ENCODE measurements at regions of chr7 and their contacts with region 1.

Region 1: DNA sequence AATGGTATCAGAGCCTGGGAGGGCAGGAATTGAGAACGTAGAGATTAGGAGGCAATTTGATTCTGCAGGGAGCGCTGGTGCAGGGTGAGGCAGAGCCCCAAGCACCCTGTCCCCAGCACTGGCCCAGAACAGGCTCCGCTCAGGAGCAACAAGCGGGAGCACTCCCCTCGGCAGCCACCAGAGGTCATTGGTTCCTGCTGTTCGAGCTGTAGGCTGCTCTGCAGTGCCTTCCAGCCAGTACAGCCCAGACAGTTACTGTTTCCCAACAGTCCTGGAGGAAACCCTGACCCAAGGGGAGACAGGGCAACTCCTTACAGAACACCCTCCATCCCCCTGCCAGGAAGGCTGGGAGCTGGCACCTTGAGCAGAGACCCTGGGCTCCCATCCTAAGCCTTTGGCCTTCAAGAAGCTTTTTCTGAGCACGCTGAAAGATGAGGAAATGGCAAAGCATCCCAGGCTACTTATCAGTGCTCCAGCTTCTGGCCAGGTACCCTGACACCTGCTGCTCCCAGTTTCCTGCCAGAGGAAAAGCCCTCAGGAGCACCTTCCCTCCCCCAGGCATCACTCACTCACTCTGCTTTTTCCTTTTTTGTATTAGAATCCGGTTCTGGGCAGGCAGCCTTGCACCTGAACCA is 71.2 kb upstream of the EFCAB10 start:
- DNase-seq: peak; percentile 46 to 59 (median 52)
- H3K4me3 ChIP-seq: no peak overlapping the region
- H3K4me3 Mint-ChIP-seq: no peak overlapping the region
- H3K27ac ChIP-seq: no peak overlapping the region
- H3K27ac Mint-ChIP-seq: peak overlapping the region in 2 of 7 donors; percentile 1 to 24
- H3K4me1 ChIP-seq: peaks cover 7% of the 10 kb centered on the region
- H3K4me1 Mint-ChIP-seq: peaks cover 12 to 28% (median 16%) of the 10 kb centered on the region in 4 donors
- H3K27me3 ChIP-seq: no peaks in the 10 kb centered on the region
- H3K27me3 Mint-ChIP-seq: no peaks in the 10 kb centered on the region

Region 2: DNA sequence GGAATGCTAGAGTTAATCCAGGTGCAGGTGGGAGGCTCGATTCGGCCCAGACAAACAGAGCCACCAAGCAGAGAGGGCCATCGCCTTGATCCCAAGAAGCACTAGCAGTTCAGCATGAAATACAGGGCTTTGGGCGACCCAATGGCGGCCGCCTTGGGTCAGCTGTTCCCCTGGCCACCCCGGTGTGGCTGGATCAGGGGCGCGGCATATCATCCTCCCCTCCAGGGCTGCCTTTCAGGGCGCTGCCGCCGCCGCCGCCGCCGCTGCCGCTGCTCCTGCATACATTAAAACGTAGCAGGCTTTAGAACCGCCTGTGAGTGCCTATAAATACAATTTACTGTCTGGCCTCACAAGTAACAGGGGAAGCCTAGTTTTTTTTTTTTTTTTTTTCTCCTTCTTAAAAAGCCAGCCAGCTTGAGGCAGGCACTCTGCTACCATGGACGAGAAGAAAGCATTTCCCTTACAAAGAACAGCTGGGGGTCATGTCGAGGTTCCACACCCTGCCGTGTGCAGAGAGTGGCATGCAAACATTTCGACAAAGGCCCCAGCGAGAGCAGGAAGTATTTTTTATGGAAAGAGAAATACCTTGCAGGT is 13.5 kb before region 1 on chr7:
- CTCF ChIA-PET with region 1: interaction called, 15 read pairs
- POLR2A ChIA-PET with region 1: no interaction called
- intact Hi-C with region 1: no loop called
- DNase-seq: no peak
- H3K4me3 ChIP-seq: no peak overlapping the region
- H3K4me3 Mint-ChIP-seq: no peak overlapping the region
- H3K27ac ChIP-seq: no peak overlapping the region
- H3K27ac Mint-ChIP-seq: no peak overlapping the region
- H3K4me1 ChIP-seq: no peaks in the 10 kb centered on the region
- H3K4me1 Mint-ChIP-seq: no peaks in the 10 kb centered on the region
- H3K27me3 ChIP-seq: no peaks in the 10 kb centered on the region
- H3K27me3 Mint-ChIP-seq: no peaks in the 10 kb centered on the region

Region 3: GRCh38 chr7:105678811-105679495 is 26.5 kb after region 1 on chr7:
- CTCF ChIA-PET with region 1: interaction called, 82 read pairs
- POLR2A ChIA-PET with region 1: interaction called, 5 read pairs
- intact Hi-C with region 1: no loop called
- DNase-seq: peak in 2 of 5 donors; percentile 17 to 27
- H3K4me3 ChIP-seq: peak overlapping the region; percentile 12 to 27
- H3K4me3 Mint-ChIP-seq: peak overlapping the region; percentile 86 to 95 (median 92)
- H3K27ac ChIP-seq: peak overlapping the region; percentile 83
- H3K27ac Mint-ChIP-seq: peak overlapping the region; percentile 90 to 99 (median 96)
- H3K4me1 ChIP-seq: peaks cover 63% of the 10 kb centered on the region
- H3K4me1 Mint-ChIP-seq: peaks cover 61 to 94% (median 74%) of the 10 kb centered on the region in 4 donors
- H3K27me3 ChIP-seq: no peaks in the 10 kb centered on the region
- H3K27me3 Mint-ChIP-seq: no peaks in the 10 kb centered on the region

Region 4: GRCh38 chr7:105713488-105714465 is 61.3 kb after region 1 on chr7:
- CTCF ChIA-PET with region 1: interaction called, 13 read pairs
- POLR2A ChIA-PET with region 1: no interaction called
- intact Hi-C with region 1: no loop called
- DNase-seq: no peak
- H3K4me3 ChIP-seq: no peak overlapping the region
- H3K4me3 Mint-ChIP-seq: no peak overlapping the region
- H3K27ac ChIP-seq: no peak overlapping the region
- H3K27ac Mint-ChIP-seq: no peak overlapping the region
- H3K4me1 ChIP-seq: no peaks in the 10 kb centered on the region
- H3K4me1 Mint-ChIP-seq: peaks cover 0 to 3% (median 2%) of the 10 kb centered on the region in 4 donors
- H3K27me3 ChIP-seq: no peaks in the 10 kb centered on the region
- H3K27me3 Mint-ChIP-seq: no peaks in the 10 kb centered on the region

Region 5: GRCh38 chr7:105738133-105738532 is 85.7 kb after region 1 on chr7:
- CTCF ChIA-PET with region 1: interaction called, 14 read pairs
- POLR2A ChIA-PET with region 1: no interaction called
- intact Hi-C with region 1: no loop called
- DNase-seq: no peak
- H3K4me3 ChIP-seq: no peak overlapping the region
- H3K4me3 Mint-ChIP-seq: no peak overlapping the region
- H3K27ac ChIP-seq: no peak overlapping the region
- H3K27ac Mint-ChIP-seq: peak overlapping the region in 1 of 7 donors; percentile 5
- H3K4me1 ChIP-seq: peaks cover 4% of the 10 kb centered on the region
- H3K4me1 Mint-ChIP-seq: peaks cover 6 to 16% (median 14%) of the 10 kb centered on the region in 4 donors
- H3K27me3 ChIP-seq: no peaks in the 10 kb centered on the region
- H3K27me3 Mint-ChIP-seq: no peaks in the 10 kb centered on the region

Region 6: GRCh38 chr7:105876091-105876963 is 223.9 kb after region 1 on chr7 and contains the start of gene ATXN7L1:
- CTCF ChIA-PET with region 1: interaction called, 22 read pairs
- POLR2A ChIA-PET with region 1: interaction called, 3 read pairs
- intact Hi-C with region 1: loop called (anchors 1 kb)
- DNase-seq: peak; percentile 85 to 90 (median 86)
- H3K4me3 ChIP-seq: peak within 1 kb of the TSS; percentile 78 to 92
- H3K4me3 Mint-ChIP-seq: peak within 1 kb of the TSS; percentile 95 to 100 (median 98)
- H3K27ac ChIP-seq: peak within 1 kb of the TSS; percentile 82
- H3K27ac Mint-ChIP-seq: peak within 1 kb of the TSS; percentile 83 to 99 (median 96)
- H3K4me1 ChIP-seq: peaks cover 52% of the 10 kb centered on the region
- H3K4me1 Mint-ChIP-seq: peaks cover 43 to 63% (median 51%) of the 10 kb centered on the region in 4 donors
- H3K27me3 ChIP-seq: no peaks in the 10 kb centered on the region
- H3K27me3 Mint-ChIP-seq: no peaks in the 10 kb centered on the region
- total RNA-seq, gene ATXN7L1: 60.4 to 62.2 TPM

Region 7: DNA sequence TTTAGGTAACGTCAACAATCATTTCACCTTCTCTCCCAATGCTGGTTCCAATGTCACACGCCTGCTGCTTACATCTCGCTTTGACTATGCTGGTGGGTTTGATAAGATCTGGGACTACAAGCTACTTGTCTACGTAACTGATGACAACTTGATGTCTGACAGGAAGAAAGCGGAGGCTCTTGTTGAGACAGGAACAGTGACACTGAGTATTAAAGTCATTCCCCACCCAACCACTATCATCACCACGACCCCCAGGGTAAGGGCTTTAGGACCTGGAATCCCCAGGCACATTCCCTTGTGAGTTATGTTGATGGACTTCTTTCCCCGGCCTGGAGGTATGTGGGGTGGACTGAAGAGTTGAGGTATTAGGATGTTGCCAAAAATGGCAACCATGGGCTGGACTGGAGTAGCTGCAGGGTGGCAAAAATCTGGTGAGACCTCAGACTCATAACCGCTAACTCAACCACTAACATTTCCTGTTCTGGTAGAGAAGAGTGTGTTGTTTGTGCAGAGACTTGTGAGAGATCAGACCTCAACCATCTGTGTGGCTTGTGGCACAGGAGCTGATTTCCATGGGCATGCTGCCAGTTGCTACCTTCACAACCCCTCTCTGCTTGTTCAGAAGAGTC is 369.8 kb after region 1 on chr7:
- CTCF ChIA-PET with region 1: interaction called, 12 read pairs
- POLR2A ChIA-PET with region 1: interaction called, 8 read pairs
- intact Hi-C with region 1: no loop called
- DNase-seq: peak; percentile 89 to 92 (median 91)
- H3K4me3 ChIP-seq: peak overlapping the region in 1 of 2 donors; percentile 48
- H3K4me3 Mint-ChIP-seq: peak overlapping the region; percentile 5 to 82 (median 72)
- H3K27ac ChIP-seq: peak overlapping the region; percentile 48
- H3K27ac Mint-ChIP-seq: peak overlapping the region; percentile 88 to 99 (median 98)
- H3K4me1 ChIP-seq: peaks cover 52% of the 10 kb centered on the region
- H3K4me1 Mint-ChIP-seq: peaks cover 38 to 70% (median 48%) of the 10 kb centered on the region in 4 donors
- H3K27me3 ChIP-seq: no peaks in the 10 kb centered on the region
- H3K27me3 Mint-ChIP-seq: no peaks in the 10 kb centered on the region

Measured in CD4-positive, alpha-beta memory T cell (primary cell).